ENCODE measurements at regions of chr17 and their contacts with region 1.

Region 1: GRCh38 chr17:19648475-19649406 is at the start of gene ALDH3A2:
- DNase-seq: peak; percentile 94 to 99
- H3K4me3 ChIP-seq: peak within 1 kb of the TSS; percentile 75 to 85
- H3K27ac ChIP-seq: peak within 1 kb of the TSS; percentile 97 to 99
- H3K4me1 ChIP-seq: peaks cover 11 to 41% of the 10 kb centered on the region in 2 donors
- H3K27me3 ChIP-seq: no peaks in the 10 kb centered on the region
- CTCF ChIP-seq: peak in 2 of 3 experiments; percentile 27 to 28
- total RNA-seq, gene ALDH3A2: 189 TPM

Region 2: GRCh38 chr17:19507775-19508576 is 140.8 kb before region 1 on chr17:
- intact Hi-C with region 1: loop called (anchors 1 kb)
- DNase-seq: peak; percentile 49 to 95
- H3K4me3 ChIP-seq: peak overlapping the region; percentile 83 to 87
- H3K27ac ChIP-seq: peak overlapping the region; percentile 97 to 98
- H3K4me1 ChIP-seq: peaks cover 0 to 6% of the 10 kb centered on the region in 2 donors
- H3K27me3 ChIP-seq: no peaks in the 10 kb centered on the region
- CTCF ChIP-seq: no peak

Region 3: GRCh38 chr17:19579867-19580565 is 68.7 kb before region 1 on chr17:
- intact Hi-C with region 1: loop called (anchors 5 kb)
- DNase-seq: no peak
- H3K4me3 ChIP-seq: peak overlapping the region; percentile 66 to 67
- H3K27ac ChIP-seq: peak overlapping the region in 1 of 2 donors; percentile 66
- H3K4me1 ChIP-seq: peaks cover 7 to 8% of the 10 kb centered on the region in 2 donors
- H3K27me3 ChIP-seq: no peaks in the 10 kb centered on the region
- CTCF ChIP-seq: no peak

Region 4: DNA sequence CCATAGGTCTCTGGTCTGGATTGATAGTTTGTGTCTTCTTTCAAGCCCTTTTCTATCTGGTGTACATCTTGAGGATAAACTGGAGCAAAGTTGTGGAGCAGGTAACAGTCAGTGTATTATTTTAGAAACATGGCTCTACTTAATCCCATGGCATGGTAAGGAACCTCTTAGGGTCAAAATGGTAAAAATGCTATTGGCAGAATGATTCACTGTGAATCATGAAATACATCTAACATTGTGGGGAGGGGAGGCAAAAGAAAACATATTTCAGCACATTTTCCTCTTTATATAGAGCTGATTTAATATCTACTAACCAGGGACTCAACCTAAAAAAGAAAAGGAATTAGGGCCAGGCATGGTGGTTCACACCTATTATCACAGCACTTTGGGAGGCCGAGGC is 18.1 kb before region 1 on chr17:
- intact Hi-C with region 1: no loop called
- DNase-seq: no peak
- H3K4me3 ChIP-seq: no peak overlapping the region
- H3K27ac ChIP-seq: no peak overlapping the region
- H3K4me1 ChIP-seq: no peaks in the 10 kb centered on the region
- H3K27me3 ChIP-seq: no peaks in the 10 kb centered on the region
- CTCF ChIP-seq: no peak

Region 5: DNA sequence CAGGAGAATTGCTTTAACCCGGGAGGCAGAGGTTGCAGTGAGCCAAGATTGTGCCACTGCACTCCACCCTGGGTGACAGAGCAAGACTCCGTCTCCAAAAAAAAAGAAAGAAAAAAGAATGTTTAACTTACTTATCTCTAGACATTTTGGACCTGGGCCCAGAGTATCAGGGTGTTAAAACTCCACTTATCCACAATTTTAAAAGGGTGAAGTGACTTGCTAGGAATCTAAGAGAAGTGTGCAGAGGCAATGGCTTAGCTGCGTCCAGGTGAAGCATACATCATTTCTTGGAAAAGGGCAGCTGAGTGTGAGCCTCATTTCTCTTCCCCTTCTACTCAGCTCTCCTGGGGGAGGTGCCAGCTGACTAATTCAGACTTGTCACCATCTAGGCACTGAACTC is 24.9 kb after region 1 on chr17:
- intact Hi-C with region 1: loop called (anchors 1 kb)
- DNase-seq: peak in 1 of 2 donors; percentile 78
- H3K4me3 ChIP-seq: no peak overlapping the region
- H3K27ac ChIP-seq: peak overlapping the region; percentile 46 to 47
- H3K4me1 ChIP-seq: peaks cover 0 to 7% of the 10 kb centered on the region in 2 donors
- H3K27me3 ChIP-seq: no peaks in the 10 kb centered on the region
- CTCF ChIP-seq: no peak

Region 6: DNA sequence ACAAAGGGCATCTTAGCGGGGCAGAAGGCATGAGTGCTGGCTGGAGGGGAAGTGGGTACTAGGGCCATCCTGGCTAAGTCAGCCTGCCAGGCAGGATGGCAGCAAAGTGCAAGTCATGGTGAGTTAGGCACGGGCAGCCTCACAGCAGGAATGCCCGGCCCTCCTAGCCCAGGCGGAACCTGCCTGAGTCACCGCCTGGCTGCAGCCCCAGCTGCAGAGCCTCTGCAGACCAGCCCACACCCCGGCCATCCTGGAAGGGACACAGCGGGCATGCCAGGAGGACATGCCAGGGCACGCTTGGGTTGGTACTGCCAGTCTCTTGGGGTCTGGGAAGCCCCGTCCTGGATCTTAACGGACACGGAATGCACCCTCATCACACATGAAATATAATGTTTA is 104.3 kb after region 1 on chr17:
- intact Hi-C with region 1: loop called (anchors 1 kb)
- DNase-seq: peak; percentile 78 to 95
- H3K4me3 ChIP-seq: no peak overlapping the region
- H3K27ac ChIP-seq: peak overlapping the region; percentile 93 to 99
- H3K4me1 ChIP-seq: peaks cover 10 to 30% of the 10 kb centered on the region in 2 donors
- H3K27me3 ChIP-seq: no peaks in the 10 kb centered on the region
- CTCF ChIP-seq: no peak

Measured in ascending aorta (tissue), 2 donors.